ENCODE measurements at regions of chr7 and their contacts with region 1.

Region 1: GRCh38 chr7:133290041-133290440 is 37.2 kb downstream of the EXOC4 start:
- DNase-seq: no peak
- H3K4me3 ChIP-seq: no peak overlapping the region
- H3K27ac ChIP-seq: no peak overlapping the region
- H3K4me1 ChIP-seq: no peaks in the 10 kb centered on the region
- H3K27me3 ChIP-seq: no peaks in the 10 kb centered on the region
- CTCF ChIP-seq: no peak

Region 2: DNA sequence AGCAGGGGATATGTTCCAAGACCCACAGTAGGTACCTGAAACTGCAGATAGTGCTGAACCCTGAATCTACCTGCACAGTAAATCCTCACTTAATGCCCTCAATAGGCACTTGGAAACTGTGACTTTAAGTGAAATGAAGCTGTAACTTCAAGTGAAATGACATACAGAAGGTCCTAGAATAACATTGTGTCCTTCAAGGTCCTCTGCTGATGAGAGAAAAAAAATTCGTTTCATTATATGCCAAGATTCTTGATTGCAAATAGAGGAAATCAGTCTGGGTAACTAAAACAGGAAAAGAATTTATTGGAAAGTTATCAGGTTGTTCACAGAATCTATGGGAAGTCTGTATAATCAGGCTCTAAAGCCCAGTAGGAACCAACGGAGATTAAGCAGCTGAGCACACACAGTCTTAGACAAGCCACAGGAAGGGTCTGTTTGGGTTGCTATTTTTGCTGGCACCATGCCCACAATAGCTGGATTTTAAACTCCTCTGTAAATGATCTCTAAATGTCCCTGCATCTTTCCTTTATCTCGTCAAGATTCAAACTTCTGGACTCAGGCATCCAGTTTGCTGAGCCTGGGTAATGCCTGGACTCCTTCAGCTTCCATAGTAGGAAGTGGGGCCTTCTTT is 20.3 kb after region 1 on chr7:
- CTCF ChIA-PET with region 1: no interaction called
- POLR2A ChIA-PET with region 1: interaction called, 14 read pairs
- intact Hi-C with region 1: no loop called
- DNase-seq: no peak
- H3K4me3 ChIP-seq: no peak overlapping the region
- H3K27ac ChIP-seq: no peak overlapping the region
- H3K4me1 ChIP-seq: no peaks in the 10 kb centered on the region
- H3K27me3 ChIP-seq: no peaks in the 10 kb centered on the region
- CTCF ChIP-seq: no peak

Measured in PC-9 (cell line).